Tibial artery (tissue), 4 donors: ENCODE measurements at regions of chr2 and their contacts with region 1.

Region 1: GRCh38 chr2:204325468-204325867 is 219.8 kb upstream of the PARD3B start:
- DNase-seq: peak in 1 of 2 donors; percentile 49
- H3K4me3 ChIP-seq: no peak overlapping the region
- H3K27ac ChIP-seq: no peak overlapping the region
- H3K4me1 ChIP-seq: peaks cover 0 to 17% (median 3%) of the 10 kb centered on the region in 4 donors
- H3K27me3 ChIP-seq: no peaks in the 10 kb centered on the region
- CTCF ChIP-seq: peak; percentile 88

Region 2: GRCh38 chr2:204691911-204692510 is 366.5 kb after region 1 on chr2:
- intact Hi-C with region 1: loop called (anchors 5 kb)
- DNase-seq: peak in 1 of 2 donors; percentile 43
- H3K4me3 ChIP-seq: no peak overlapping the region
- H3K27ac ChIP-seq: no peak overlapping the region
- H3K4me1 ChIP-seq: peaks cover 0 to 27% (median 0%) of the 10 kb centered on the region in 4 donors
- H3K27me3 ChIP-seq: no peaks in the 10 kb centered on the region
- CTCF ChIP-seq: peak; percentile 69 to 72